CD14-positive monocyte (primary cell): ENCODE measurements at regions of chr10 and their contacts with region 1.

Region 1: GRCh38 chr10:49592726-49593563 is 17.2 kb upstream of the SLC18A3 start:
- DNase-seq: peak; percentile 41 to 60 (median 53)
- H3K4me3 ChIP-seq: no peak overlapping the region
- H3K4me3 Mint-ChIP-seq: no peak overlapping the region
- H3K27ac ChIP-seq: no peak overlapping the region
- H3K27ac Mint-ChIP-seq: no peak overlapping the region
- H3K4me1 ChIP-seq: no peaks in the 10 kb centered on the region
- H3K4me1 Mint-ChIP-seq: peaks cover 2% of the 10 kb centered on the region
- H3K27me3 ChIP-seq: no peaks in the 10 kb centered on the region
- H3K27me3 Mint-ChIP-seq: peaks cover 13 to 17% (median 16%) of the 10 kb centered on the region in 3 donors
- CTCF ChIP-seq: peak; percentile 92

Region 2: DNA sequence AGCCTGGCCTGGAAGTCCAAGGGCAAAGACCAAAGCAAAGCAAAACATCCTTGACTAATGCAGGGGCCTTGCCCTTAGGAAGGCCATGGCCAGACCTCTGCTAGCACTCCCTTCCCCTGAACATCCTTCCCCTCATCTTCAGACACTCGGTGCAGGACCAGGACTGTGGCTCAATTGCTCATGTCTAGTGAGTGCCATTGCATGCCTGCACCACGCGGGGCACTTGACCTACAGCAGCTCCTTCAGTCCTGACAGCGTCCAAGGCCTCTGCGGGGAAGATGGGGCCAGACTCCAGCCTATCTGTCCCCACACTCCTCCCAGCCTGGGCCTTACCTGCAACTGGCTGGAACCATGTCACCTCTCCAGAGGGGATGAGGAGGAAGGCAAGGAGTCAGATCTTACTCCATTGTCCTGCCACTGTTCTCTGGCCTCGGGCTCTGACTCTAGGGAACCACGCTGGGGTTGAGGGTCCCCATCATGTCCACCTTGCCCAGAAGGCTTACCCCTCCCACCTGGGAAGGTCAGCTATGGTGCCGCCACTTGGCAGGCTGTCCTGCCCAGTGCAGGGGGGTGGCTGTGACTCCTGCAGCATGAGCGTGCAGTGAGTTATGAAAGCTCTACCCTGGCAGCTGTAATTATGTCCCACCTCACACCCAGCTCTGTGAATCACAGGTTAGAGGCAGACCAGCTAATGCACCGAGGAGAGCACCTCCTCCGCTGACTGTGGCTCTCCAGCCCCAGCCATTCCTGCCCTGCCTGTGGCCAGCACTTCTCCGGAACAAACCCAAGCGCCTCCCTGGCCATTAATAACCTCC is 213.1 kb before region 1 on chr10:
- intact Hi-C with region 1: no loop called
- DNase-seq: peak in 1 of 3 donors; percentile 11
- H3K4me3 ChIP-seq: no peak overlapping the region
- H3K4me3 Mint-ChIP-seq: no peak overlapping the region
- H3K27ac ChIP-seq: no peak overlapping the region
- H3K27ac Mint-ChIP-seq: no peak overlapping the region
- H3K4me1 ChIP-seq: no peaks in the 10 kb centered on the region
- H3K4me1 Mint-ChIP-seq: no peaks in the 10 kb centered on the region
- H3K27me3 ChIP-seq: no peaks in the 10 kb centered on the region
- H3K27me3 Mint-ChIP-seq: peaks cover 6 to 14% (median 8%) of the 10 kb centered on the region in 3 donors
- CTCF ChIP-seq: peak; percentile 41

Region 3: DNA sequence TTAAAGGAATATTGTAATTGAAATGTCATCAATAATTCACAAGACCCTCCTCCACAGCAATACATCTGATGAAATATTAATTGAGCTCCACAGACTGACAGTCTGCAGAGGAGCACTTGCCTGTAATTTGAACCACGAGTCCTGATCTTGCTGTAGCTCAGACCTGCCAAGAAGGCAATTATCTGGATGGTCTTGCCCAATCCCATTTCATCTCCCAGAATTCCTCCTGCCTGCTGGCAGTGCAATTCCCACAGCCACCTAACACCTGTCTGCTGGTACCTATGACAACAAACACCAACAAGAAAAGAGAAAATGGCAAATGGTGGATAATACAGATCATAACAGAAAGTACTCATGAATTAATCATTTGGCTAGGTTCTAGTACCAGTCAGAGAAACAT is 92.5 kb before region 1 on chr10:
- intact Hi-C with region 1: no loop called
- DNase-seq: no peak
- H3K4me3 ChIP-seq: no peak overlapping the region
- H3K4me3 Mint-ChIP-seq: no peak overlapping the region
- H3K27ac ChIP-seq: no peak overlapping the region
- H3K27ac Mint-ChIP-seq: no peak overlapping the region
- H3K4me1 ChIP-seq: no peaks in the 10 kb centered on the region
- H3K4me1 Mint-ChIP-seq: no peaks in the 10 kb centered on the region
- H3K27me3 ChIP-seq: no peaks in the 10 kb centered on the region
- H3K27me3 Mint-ChIP-seq: no peaks in the 10 kb centered on the region
- CTCF ChIP-seq: no peak

Region 4: DNA sequence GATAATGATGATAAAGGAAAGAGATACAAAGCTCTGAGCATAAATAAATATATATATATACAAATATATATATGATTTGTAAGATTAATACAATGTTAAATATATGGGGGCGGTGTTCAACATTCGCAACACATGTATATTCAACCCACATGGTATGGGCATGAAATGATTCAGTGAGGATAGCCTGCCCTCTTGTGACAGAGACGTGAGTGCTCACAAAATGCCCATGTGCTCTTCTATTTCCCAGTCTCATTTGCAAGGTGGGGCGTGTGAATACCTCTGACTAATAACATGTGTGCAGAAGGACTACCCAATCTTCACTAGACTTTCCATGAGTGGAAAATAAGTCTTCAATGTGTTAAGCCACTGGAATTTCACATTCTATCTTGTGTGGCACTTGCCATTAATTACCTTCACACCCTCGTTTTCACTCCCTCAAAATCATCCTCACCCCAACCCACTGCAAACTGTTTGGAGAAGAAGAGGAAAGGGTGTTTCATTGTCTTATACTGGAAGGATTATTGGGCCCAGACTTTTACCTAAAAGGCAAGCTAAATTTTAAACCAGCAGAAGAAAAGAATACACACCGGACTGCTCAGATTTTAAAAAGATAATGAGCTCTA is 631.5 kb after region 1 on chr10:
- intact Hi-C with region 1: loop called in 1 of 2 experiments (anchors 5 kb)
- DNase-seq: peak; percentile 6 to 37 (median 14)
- H3K4me3 ChIP-seq: no peak overlapping the region
- H3K4me3 Mint-ChIP-seq: no peak overlapping the region
- H3K27ac ChIP-seq: no peak overlapping the region
- H3K27ac Mint-ChIP-seq: no peak overlapping the region
- H3K4me1 ChIP-seq: no peaks in the 10 kb centered on the region
- H3K4me1 Mint-ChIP-seq: no peaks in the 10 kb centered on the region
- H3K27me3 ChIP-seq: peaks cover 0 to 6% of the 10 kb centered on the region in 2 donors
- H3K27me3 Mint-ChIP-seq: peaks cover 5 to 14% (median 7%) of the 10 kb centered on the region in 3 donors
- CTCF ChIP-seq: peak; percentile 45